Kidney (tissue), 22 donors: ENCODE measurements at regions of chr7 and their contacts with region 1.

Region 1: GRCh38 chr7:137898839-137899721 is 52.3 kb upstream of the DGKI start:
- DNase-seq: peak; percentile 76 to 90 (median 85)
- H3K4me3 ChIP-seq: no peak overlapping the region
- H3K27ac ChIP-seq: no peak overlapping the region
- H3K4me1 ChIP-seq: peaks cover 0 to 2% (median 0%) of the 10 kb centered on the region in 3 donors
- H3K27me3 ChIP-seq: no peaks in the 10 kb centered on the region
- CTCF ChIP-seq: peak; percentile 93

Region 2: DNA sequence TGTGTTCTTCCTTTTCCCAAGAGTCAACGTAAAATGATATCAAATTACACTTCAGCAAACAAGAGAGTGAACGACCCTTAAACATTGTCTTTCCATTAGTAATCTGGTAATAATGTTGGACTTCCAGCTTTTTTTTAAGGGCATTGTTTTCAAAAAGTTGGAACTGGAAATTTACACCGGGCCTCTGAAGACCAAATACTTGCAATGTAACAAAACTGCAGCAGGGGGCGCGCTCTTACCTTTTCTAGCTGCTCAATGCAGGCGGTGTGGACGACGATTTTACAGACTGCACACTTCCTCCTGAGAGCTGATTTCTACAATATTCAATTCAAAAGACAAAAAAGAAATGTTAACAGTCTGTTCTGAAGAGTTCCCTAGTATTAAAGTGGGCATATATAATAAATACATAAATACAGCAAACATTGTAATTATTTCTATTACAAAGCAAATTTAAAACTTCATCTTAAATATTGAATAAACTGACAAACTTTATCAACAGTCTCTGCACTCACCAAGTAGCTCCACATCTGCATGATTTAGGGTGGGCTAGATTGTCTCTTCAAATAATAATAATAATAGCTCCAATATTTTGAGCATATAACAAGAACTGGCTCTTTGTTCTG is 242.7 kb before region 1 on chr7:
- intact Hi-C with region 1: loop called (anchors 5 kb)
- DNase-seq: peak; percentile 78 to 89 (median 79)
- H3K4me3 ChIP-seq: no peak overlapping the region
- H3K27ac ChIP-seq: no peak overlapping the region
- H3K4me1 ChIP-seq: no peaks in the 10 kb centered on the region
- H3K27me3 ChIP-seq: no peaks in the 10 kb centered on the region
- CTCF ChIP-seq: peak; percentile 88

Region 3: GRCh38 chr7:138008547-138009349 is 109.7 kb after region 1 on chr7:
- intact Hi-C with region 1: loop called (anchors 5 kb)
- DNase-seq: peak in 4 of 5 donors; percentile 58 to 92 (median 72)
- H3K4me3 ChIP-seq: peak overlapping the region in 1 of 3 donors; percentile 42
- H3K27ac ChIP-seq: no peak overlapping the region
- H3K4me1 ChIP-seq: no peaks in the 10 kb centered on the region
- H3K27me3 ChIP-seq: no peaks in the 10 kb centered on the region
- CTCF ChIP-seq: peak; percentile 94